HepG2 (cell line): ENCODE measurements at regions of chr22 and their contacts with region 1.

Region 1: DNA sequence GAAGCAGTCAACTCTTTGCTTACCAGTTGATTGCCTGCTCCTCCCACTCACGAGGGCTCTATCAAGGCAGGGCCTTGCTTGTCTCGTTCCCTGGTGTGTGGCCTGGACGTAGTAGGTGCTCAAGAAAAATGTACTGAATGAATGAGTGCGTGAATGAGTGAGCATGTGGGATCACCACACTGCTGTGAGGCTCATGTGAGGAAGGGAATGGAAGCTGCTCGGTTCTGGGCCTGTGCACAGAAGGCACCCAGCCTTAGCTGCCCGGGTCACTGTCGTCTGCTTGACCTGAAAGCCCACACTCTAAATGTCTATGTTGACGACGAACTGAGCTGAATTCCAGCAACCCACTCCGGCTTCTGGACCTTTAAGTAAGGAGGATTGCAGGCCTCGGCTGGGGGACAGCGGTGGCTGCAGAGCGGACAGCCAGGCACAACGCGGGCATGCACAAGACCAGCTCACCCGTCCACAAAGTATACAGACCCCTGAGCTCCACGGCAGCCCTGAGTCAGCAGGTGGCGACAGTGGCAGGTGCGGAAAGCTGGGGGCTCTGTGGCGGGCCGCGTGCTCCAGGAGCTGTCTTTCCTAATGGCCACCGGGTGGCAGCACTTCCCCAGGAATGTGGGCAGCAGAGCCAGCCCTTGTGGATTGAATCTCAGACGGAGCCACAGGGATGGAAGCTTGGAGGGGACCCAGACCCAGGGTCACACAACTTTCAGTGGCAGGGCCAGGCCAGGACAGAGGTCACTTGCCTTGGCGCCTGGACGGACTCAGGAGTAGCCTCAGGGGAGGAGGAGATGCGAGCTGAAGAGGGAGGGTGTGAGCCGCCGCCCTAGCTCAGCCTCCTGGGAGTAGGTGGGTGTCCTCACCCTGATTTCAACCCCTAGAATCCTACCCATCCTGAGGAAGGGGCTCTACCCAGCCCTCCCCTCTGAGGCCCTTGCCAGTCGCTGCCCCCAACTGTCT is 5.0 kb upstream of the PICK1 start:
- DNase-seq: peak; percentile 84
- ATAC-seq: peak; percentile 89
- H3K4me3 ChIP-seq: peak overlapping the region in 2 of 3 experiments; percentile 27 to 57; a peak in 3 of 6 replicates
- H3K27ac ChIP-seq: no peak overlapping the region
- H3K4me1 ChIP-seq: peaks cover 43% of the 10 kb centered on the region
- H3K27me3 ChIP-seq: peaks cover 2 to 22% of the 10 kb centered on the region in 2 experiments; a peak in 3 of 5 replicates
- CTCF ChIP-seq: peak; percentile 100
- EP300 ChIP-seq: no peak
- POLR2A ChIP-seq: no peak
- RAD21 ChIP-seq: peak; percentile 99

Region 2: DNA sequence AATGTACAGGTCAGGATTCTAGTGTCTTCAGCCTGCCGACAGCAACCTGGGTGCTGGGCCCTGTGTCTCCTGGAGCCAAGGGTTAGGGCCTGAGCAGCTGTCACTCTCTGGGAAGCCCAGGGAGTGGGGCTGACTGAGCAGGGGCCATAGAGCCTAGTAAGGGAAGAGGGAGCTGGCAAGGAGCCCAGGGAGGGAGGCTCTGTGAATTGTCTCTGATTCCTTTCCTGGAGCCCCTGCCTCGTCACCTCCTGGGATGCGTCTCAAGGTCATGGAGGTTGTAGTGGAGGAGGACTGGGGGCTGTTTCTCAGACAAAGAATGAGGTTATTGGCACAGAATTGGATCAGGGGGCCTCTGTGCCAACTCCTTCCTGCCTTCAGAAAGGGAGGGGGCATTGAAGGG is 79.7 kb before region 1 on chr22:
- CTCF ChIA-PET with region 1: no interaction called
- POLR2A ChIA-PET with region 1: no interaction called
- in situ Hi-C with region 1: no loop called
- intact Hi-C with region 1: no loop called
- DNase-seq: no peak
- ATAC-seq: no peak
- H3K4me3 ChIP-seq: no peak overlapping the region
- H3K27ac ChIP-seq: no peak overlapping the region
- H3K4me1 ChIP-seq: peaks cover 47% of the 10 kb centered on the region
- H3K27me3 ChIP-seq: no peaks in the 10 kb centered on the region
- CTCF ChIP-seq: no peak
- EP300 ChIP-seq: no peak
- POLR2A ChIP-seq: no peak
- RAD21 ChIP-seq: no peak

Region 3: DNA sequence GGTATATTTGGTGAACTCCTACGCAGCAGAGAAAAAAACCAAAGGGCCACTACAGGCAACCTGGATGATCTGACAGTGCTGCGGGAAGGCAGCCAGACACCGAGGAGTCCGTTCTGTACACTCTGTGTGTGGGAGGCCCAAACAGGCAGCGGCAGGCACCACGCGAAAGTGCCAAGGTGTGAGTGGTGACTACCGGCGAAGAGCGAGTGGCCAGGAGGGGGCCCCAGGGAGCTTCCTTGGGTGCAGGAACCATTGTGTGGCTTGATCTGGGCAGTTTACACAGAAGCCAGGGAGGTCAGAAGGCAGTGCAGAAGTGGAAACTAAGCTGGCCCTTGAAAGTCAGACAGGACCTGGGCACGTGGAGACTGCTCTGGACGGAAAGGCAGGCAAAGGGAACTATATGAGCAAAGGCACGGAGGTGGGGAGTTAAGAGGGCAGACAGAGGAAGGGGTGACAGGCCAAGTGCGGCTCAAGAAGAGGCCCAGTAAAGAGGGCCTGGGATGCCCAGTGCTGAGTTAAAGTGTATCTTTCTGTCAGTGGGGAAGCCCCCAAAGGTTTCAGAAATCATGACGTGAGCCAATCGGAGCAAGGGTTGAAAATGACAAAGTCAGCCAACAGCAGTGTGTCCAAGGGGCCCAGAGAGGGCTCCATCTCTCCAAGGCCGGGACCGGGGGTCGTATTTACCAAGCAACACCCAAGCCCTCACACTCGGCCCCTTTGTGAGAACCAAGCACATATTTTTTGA is 210.0 kb after region 1 on chr22:
- CTCF ChIA-PET with region 1: interaction called, 3 read pairs
- POLR2A ChIA-PET with region 1: interaction called, 3 read pairs
- in situ Hi-C with region 1: no loop called
- intact Hi-C with region 1: loop called (anchors 10 kb)
- DNase-seq: peak; percentile 54
- ATAC-seq: peak; percentile 87
- H3K4me3 ChIP-seq: peak overlapping the region; percentile 15 to 53 (median 25); a peak in 3 of 6 replicates
- H3K27ac ChIP-seq: peak overlapping the region; percentile 73
- H3K4me1 ChIP-seq: peaks cover 63% of the 10 kb centered on the region
- H3K27me3 ChIP-seq: no peaks in the 10 kb centered on the region
- CTCF ChIP-seq: peak; percentile 91
- EP300 ChIP-seq: no peak
- POLR2A ChIP-seq: no peak
- RAD21 ChIP-seq: peak; percentile 80

Region 4: GRCh38 chr22:38513063-38513462 is 460.9 kb after region 1 on chr22:
- CTCF ChIA-PET with region 1: interaction called, 4 read pairs
- POLR2A ChIA-PET with region 1: no interaction called
- in situ Hi-C with region 1: loop called (anchors 10 kb)
- intact Hi-C with region 1: loop called (anchors 5 kb)
- DNase-seq: peak; percentile 42
- ATAC-seq: peak; percentile 99
- H3K4me3 ChIP-seq: no peak overlapping the region
- H3K27ac ChIP-seq: no peak overlapping the region
- H3K4me1 ChIP-seq: peaks cover 14% of the 10 kb centered on the region
- H3K27me3 ChIP-seq: no peaks in the 10 kb centered on the region; a peak in 1 of 5 replicates
- CTCF ChIP-seq: peak; percentile 84
- EP300 ChIP-seq: no peak
- POLR2A ChIP-seq: no peak
- RAD21 ChIP-seq: peak; percentile 49; the same call in 1 of the 2 replicates